Activated CD4-positive, alpha-beta T cell treated with anti-CD3 and anti-CD28 coated beads for 36 hours (primary cell): ENCODE measurements at regions of chr4 and their contacts with region 1.

Region 1: DNA sequence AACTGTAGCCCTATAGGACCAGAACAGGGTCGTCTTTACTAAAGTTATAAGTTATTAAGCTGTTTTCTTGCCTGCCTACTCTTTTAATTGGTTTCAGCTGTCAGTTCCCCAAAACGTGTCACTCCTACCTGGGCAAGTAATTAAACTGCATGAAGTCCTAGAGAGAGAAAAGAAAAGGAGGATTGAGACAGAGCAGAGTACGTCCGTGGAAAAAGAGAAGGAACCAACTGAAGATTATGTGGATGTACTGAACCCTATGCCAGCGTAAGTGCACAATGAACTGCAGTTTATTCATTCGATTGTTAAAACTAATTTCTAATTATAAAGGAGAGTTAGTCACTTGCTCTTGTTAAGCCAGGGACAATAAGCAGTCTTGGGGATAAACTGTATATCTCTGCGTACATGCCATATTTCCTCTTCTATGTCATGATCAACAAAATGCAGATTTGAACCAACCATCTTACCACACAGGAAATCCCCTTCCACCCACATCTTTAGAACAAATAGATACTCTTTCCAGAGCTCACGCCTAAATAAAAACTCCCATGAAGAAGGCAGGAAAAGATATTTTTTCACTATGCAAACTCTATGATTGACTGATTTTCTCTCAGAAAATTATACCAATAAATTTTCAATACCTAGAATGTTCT is 22.8 kb downstream of the STAP1 start:
- DNase-seq: no peak
- ATAC-seq: peak; percentile 81
- H3K4me3 Mint-ChIP-seq: peak overlapping the region; percentile 19
- H3K27ac Mint-ChIP-seq: peak overlapping the region; percentile 55
- H3K4me1 Mint-ChIP-seq: peaks cover 31% of the 10 kb centered on the region
- H3K27me3 Mint-ChIP-seq: no peaks in the 10 kb centered on the region

Region 2: GRCh38 chr4:67342291-67342690 is 239.0 kb before region 1 on chr4:
- CTCF ChIA-PET with region 1: no interaction called
- POLR2A ChIA-PET with region 1: no interaction called
- intact Hi-C with region 1: no loop called
- DNase-seq: no peak
- ATAC-seq: no peak
- H3K4me3 Mint-ChIP-seq: no peak overlapping the region
- H3K27ac Mint-ChIP-seq: no peak overlapping the region
- H3K4me1 Mint-ChIP-seq: no peaks in the 10 kb centered on the region
- H3K27me3 Mint-ChIP-seq: peaks cover 3% of the 10 kb centered on the region

Region 3: DNA sequence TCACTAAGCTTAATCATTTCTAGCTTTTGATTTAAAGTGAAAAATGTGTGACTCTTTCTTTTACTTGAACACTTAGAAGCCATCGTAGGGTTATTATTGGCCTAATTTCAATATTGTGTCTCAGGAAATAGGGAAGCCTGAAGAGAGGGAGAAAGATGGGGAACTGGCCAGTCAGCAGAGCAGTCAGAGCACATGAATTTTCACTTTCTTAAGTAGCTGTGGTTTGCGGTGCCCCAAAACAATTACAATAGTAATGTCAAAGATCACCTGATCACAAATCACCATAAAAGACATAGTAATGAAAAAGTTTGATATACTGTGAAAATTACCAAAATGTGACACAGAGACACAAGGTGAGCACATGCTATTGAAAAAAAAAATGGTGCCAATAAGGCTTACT is 81.5 kb before region 1 on chr4:
- CTCF ChIA-PET with region 1: no interaction called
- POLR2A ChIA-PET with region 1: no interaction called
- intact Hi-C with region 1: no loop called
- DNase-seq: no peak
- ATAC-seq: no peak
- H3K4me3 Mint-ChIP-seq: no peak overlapping the region
- H3K27ac Mint-ChIP-seq: peak overlapping the region; percentile 59
- H3K4me1 Mint-ChIP-seq: peaks cover 12% of the 10 kb centered on the region
- H3K27me3 Mint-ChIP-seq: no peaks in the 10 kb centered on the region

Region 4: GRCh38 chr4:67522851-67523671 is 58.3 kb before region 1 on chr4:
- CTCF ChIA-PET with region 1: no interaction called
- POLR2A ChIA-PET with region 1: no interaction called
- intact Hi-C with region 1: loop called in 1 of 2 experiments (anchors 5 kb)
- DNase-seq: peak; percentile 29
- ATAC-seq: peak; percentile 88
- H3K4me3 Mint-ChIP-seq: peak overlapping the region; percentile 25
- H3K27ac Mint-ChIP-seq: peak overlapping the region; percentile 92
- H3K4me1 Mint-ChIP-seq: peaks cover 63% of the 10 kb centered on the region
- H3K27me3 Mint-ChIP-seq: no peaks in the 10 kb centered on the region

Region 5: DNA sequence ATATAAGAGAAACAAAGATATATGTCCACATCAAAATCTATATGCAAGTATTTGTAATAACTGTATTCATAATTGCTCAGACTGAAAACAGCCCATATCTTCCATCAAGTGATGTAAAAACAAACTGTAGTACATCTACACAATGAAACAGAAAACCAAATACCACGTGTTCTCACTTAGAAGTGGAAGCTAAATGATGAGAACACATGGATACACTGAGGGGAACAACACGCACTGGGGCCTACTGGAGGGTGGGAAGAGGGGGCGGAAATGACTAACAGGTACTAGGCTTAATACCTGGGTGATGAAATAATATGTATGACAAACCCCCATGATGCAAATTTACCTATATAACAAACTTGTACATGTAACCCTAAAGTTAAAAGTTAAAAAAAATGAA is 77.0 kb after region 1 on chr4:
- CTCF ChIA-PET with region 1: no interaction called
- POLR2A ChIA-PET with region 1: no interaction called
- intact Hi-C with region 1: loop called in 1 of 2 experiments (anchors 5 kb)
- DNase-seq: peak; percentile 66
- ATAC-seq: peak; percentile 94
- H3K4me3 Mint-ChIP-seq: no peak overlapping the region
- H3K27ac Mint-ChIP-seq: peak overlapping the region; percentile 7
- H3K4me1 Mint-ChIP-seq: peaks cover 26% of the 10 kb centered on the region
- H3K27me3 Mint-ChIP-seq: no peaks in the 10 kb centered on the region